ENCODE measurements at regions of chr3 and their contacts with region 1.

Region 1: GRCh38 chr3:134473868-134474546 is 11.8 kb downstream of the ANAPC13 start:
- DNase-seq: peak; percentile 81 to 82
- H3K4me3 ChIP-seq: no peak overlapping the region
- H3K27ac ChIP-seq: peak overlapping the region; percentile 26
- H3K4me1 ChIP-seq: peaks cover 41% of the 10 kb centered on the region
- H3K27me3 ChIP-seq: no peaks in the 10 kb centered on the region
- CTCF ChIP-seq: peak; percentile 97

Region 2: GRCh38 chr3:133821767-133822638 is 652.0 kb before region 1 on chr3:
- CTCF ChIA-PET with region 1: no interaction called
- POLR2A ChIA-PET with region 1: interaction called, 20 read pairs
- intact Hi-C with region 1: loop called (anchors 5 kb)
- DNase-seq: no peak
- H3K4me3 ChIP-seq: no peak overlapping the region
- H3K27ac ChIP-seq: no peak overlapping the region
- H3K4me1 ChIP-seq: no peaks in the 10 kb centered on the region
- H3K27me3 ChIP-seq: no peaks in the 10 kb centered on the region
- CTCF ChIP-seq: no peak

Region 3: GRCh38 chr3:134348524-134348923 is 125.5 kb before region 1 on chr3:
- CTCF ChIA-PET with region 1: no interaction called
- POLR2A ChIA-PET with region 1: interaction called, 3 read pairs
- intact Hi-C with region 1: loop called (anchors 1 kb)
- DNase-seq: peak; percentile 91 to 96
- H3K4me3 ChIP-seq: no peak overlapping the region
- H3K27ac ChIP-seq: peak overlapping the region; percentile 100
- H3K4me1 ChIP-seq: peaks cover 67% of the 10 kb centered on the region
- H3K27me3 ChIP-seq: no peaks in the 10 kb centered on the region
- CTCF ChIP-seq: no peak

Region 4: DNA sequence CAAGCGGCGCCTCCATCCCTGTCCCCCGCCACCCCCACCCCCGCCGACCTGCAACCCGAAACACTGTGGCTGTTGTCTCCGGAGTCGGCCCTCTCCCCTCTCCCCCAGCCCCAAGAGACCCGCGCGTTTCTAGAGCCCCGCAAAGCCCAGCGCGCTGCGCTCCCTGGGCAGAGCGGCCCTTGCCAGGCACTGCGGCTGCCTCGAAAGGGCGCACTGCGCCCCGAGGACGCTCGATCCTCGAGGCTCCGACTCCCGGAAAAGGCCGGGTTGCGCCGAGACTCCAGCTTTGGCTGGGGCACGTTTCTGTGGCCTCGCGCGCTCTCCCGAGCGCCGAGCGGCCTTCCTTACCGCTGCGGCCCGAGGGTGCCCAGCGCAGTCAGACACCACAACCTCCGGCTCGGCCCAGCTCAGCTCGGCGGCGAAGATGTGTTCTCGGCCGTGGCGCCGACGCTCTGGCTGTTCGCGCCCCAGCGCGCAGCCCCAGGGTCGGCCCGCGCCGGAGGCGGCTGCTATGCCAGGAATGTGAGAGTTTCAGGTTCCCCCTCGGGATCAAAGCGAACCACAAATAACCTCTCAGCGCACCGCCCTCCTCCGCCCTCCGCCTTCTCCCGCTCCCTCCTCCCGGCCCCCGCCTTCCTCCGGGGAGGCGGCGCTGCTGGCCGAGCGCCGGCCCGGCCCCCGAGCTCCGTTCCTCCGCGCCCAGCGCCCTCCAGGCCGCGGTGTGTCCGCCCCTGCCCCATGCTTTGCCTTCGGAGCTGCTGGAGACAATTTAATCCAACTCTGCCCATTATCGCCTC is 99.8 kb before region 1 on chr3 and contains the start of gene AMOTL2:
- CTCF ChIA-PET with region 1: interaction called, 7 read pairs
- POLR2A ChIA-PET with region 1: interaction called, 6 read pairs
- intact Hi-C with region 1: loop called (anchors 1 kb)
- DNase-seq: peak; percentile 86 to 98
- H3K4me3 ChIP-seq: peak within 1 kb of the TSS; percentile 100
- H3K27ac ChIP-seq: peak within 1 kb of the TSS; percentile 98
- H3K4me1 ChIP-seq: peaks cover 70% of the 10 kb centered on the region
- H3K27me3 ChIP-seq: no peaks in the 10 kb centered on the region
- CTCF ChIP-seq: no peak
- total RNA-seq, gene AMOTL2: 147 and 221 TPM in 2 replicates

Region 5: GRCh38 chr3:134427400-134428145 is 46.4 kb before region 1 on chr3:
- CTCF ChIA-PET with region 1: interaction called, 7 read pairs
- POLR2A ChIA-PET with region 1: no interaction called
- intact Hi-C with region 1: loop called (anchors 1 kb)
- DNase-seq: peak; percentile 93 to 98
- H3K4me3 ChIP-seq: no peak overlapping the region
- H3K27ac ChIP-seq: peak overlapping the region; percentile 60
- H3K4me1 ChIP-seq: peaks cover 31% of the 10 kb centered on the region
- H3K27me3 ChIP-seq: no peaks in the 10 kb centered on the region
- CTCF ChIP-seq: no peak

Measured in PC-9 (cell line).